ENCODE measurements at regions of chr1 and their contacts with region 1.

Region 1: GRCh38 chr1:24201941-24202440 is 14.9 kb upstream of the IFNLR1 start:
- DNase-seq: peak; percentile 79
- H3K4me3 Mint-ChIP-seq: no peak overlapping the region
- H3K27ac Mint-ChIP-seq: no peak overlapping the region
- H3K4me1 Mint-ChIP-seq: peaks cover 13% of the 10 kb centered on the region
- H3K27me3 Mint-ChIP-seq: no peaks in the 10 kb centered on the region

Region 2: DNA sequence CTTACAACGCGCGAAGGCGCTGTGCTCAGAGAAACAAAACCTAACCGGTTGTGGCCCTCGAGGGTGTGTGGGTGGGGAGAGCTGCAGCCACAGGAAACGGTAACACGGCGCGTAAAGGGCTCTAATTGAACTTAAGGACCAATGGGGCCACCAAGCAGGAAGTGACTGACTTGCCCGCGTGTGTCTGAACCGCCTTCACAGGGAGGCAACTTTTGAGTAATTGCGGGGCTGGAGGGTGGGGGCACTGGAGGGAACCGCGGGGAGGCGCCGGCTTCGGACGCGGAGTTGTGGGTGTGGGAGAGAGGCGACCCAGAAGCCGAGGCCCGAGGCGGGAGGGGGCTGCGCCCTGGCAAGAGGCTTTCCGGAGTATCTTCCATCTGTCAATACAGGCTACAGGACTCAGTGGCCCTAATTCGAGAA is 242.9 kb before region 1 on chr1:
- CTCF ChIA-PET with region 1: no interaction called
- intact Hi-C with region 1: no loop called
- DNase-seq: peak; percentile 98
- H3K4me3 Mint-ChIP-seq: peak overlapping the region; percentile 99
- H3K27ac Mint-ChIP-seq: peak overlapping the region; percentile 100
- H3K4me1 Mint-ChIP-seq: peaks cover 59% of the 10 kb centered on the region
- H3K27me3 Mint-ChIP-seq: no peaks in the 10 kb centered on the region

Region 3: DNA sequence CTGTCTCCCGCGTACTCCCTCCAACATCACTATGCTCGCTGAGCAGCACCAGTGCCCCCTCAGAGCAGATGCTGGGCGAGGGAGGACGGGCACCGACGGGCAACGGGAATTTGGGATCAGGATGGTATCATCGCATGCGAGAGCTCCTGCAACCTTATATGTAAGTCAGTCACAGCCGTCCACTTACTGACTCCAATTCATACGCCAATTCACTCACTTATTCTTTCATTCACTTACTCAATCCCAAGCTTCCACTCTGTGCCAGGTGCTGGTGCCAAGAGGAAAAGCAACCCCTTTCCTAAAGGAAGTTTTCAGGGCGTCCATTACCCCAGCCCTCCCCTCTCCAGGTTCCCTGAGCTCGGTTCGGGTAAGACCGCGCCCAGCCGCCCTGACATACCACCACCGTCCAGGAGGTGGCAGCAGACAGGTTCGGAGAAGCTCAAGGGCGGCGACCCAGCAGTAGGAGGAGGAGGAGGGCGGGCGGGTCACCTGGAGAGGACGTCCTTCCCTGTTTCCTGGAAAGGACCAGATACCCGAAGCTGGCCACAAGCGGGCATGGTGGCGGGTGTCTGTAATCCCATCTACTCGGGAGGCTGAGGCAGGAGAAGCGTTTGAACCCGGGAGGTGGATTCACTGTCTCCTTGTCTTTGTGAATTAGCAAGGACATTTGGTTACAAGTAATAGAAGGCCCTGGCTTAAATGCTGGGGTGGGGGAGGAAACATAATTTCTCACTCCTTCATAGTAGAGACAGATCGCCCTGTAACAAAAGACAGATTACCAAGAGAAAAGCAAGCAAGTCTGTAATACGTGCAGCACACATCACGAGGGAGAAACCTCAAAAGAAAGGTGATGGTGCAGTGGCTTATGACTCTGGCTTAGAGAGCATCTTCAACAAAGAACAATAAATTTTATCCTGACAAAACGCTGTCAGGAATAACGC is 51.5 kb before region 1 on chr1:
- CTCF ChIA-PET with region 1: interaction called, 31 read pairs
- intact Hi-C with region 1: loop called (anchors 1 kb)
- DNase-seq: peak; percentile 95
- H3K4me3 Mint-ChIP-seq: peak overlapping the region; percentile 63
- H3K27ac Mint-ChIP-seq: no peak overlapping the region
- H3K4me1 Mint-ChIP-seq: peaks cover 18% of the 10 kb centered on the region
- H3K27me3 Mint-ChIP-seq: peaks cover 32% of the 10 kb centered on the region

Region 4: DNA sequence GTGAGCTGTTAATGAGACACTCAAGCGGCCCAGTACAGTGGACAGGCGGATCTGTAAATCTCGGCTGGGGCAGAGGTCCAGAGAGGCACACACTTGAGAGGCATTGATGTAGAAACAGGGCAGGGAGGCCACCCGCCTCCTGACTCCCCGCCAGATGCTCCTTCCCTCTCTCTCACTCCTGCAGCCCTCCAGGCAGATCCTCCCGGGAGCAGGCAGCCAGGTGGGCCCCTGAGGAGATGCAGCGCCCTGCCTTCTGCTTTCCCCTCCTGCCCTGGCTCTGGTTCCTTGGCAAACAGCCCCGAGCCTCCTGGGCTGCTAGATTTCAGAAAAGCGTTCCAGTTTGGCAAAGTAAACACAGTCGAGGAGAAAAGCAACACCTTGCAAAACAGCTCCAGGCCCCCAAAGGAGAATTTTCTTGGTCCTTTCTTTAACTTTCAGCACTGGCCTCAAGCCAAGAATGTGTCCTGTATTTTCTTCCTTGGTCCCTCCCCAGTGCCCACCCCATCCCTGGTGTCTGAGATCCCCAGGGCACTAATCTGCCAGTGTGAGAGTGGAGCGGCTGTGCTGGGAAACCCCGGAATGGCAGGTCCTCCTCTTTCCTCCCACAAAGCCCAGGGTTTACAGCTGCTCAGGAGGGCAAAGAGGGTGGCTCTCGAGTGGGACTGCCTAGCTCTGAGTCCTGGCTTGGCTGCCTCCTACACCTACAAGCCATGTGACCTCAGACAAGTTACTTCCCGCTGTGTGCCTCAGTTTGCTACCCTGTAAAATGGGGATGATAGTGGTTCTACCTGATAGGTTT is 14.5 kb after region 1 on chr1:
- CTCF ChIA-PET with region 1: interaction called, 11 read pairs
- intact Hi-C with region 1: no loop called
- DNase-seq: no peak
- H3K4me3 Mint-ChIP-seq: no peak overlapping the region
- H3K27ac Mint-ChIP-seq: no peak overlapping the region
- H3K4me1 Mint-ChIP-seq: no peaks in the 10 kb centered on the region
- H3K27me3 Mint-ChIP-seq: peaks cover 20% of the 10 kb centered on the region

Region 5: GRCh38 chr1:24297852-24298232 is 95.9 kb after region 1 on chr1:
- CTCF ChIA-PET with region 1: no interaction called
- intact Hi-C with region 1: no loop called
- DNase-seq: no peak
- H3K4me3 Mint-ChIP-seq: no peak overlapping the region
- H3K27ac Mint-ChIP-seq: no peak overlapping the region
- H3K4me1 Mint-ChIP-seq: no peaks in the 10 kb centered on the region
- H3K27me3 Mint-ChIP-seq: peaks cover 9% of the 10 kb centered on the region

Region 6: GRCh38 chr1:24385160-24385940 is 183.4 kb after region 1 on chr1:
- CTCF ChIA-PET with region 1: interaction called, 304 read pairs
- intact Hi-C with region 1: no loop called
- DNase-seq: peak; percentile 71
- H3K4me3 Mint-ChIP-seq: no peak overlapping the region
- H3K27ac Mint-ChIP-seq: no peak overlapping the region
- H3K4me1 Mint-ChIP-seq: peaks cover 21% of the 10 kb centered on the region
- H3K27me3 Mint-ChIP-seq: no peaks in the 10 kb centered on the region

Region 7: GRCh38 chr1:24457871-24458270 is 255.9 kb after region 1 on chr1:
- CTCF ChIA-PET with region 1: interaction called, 13 read pairs
- intact Hi-C with region 1: no loop called
- DNase-seq: no peak
- H3K4me3 Mint-ChIP-seq: no peak overlapping the region
- H3K27ac Mint-ChIP-seq: no peak overlapping the region
- H3K4me1 Mint-ChIP-seq: peaks cover 13% of the 10 kb centered on the region
- H3K27me3 Mint-ChIP-seq: no peaks in the 10 kb centered on the region

Region 8: DNA sequence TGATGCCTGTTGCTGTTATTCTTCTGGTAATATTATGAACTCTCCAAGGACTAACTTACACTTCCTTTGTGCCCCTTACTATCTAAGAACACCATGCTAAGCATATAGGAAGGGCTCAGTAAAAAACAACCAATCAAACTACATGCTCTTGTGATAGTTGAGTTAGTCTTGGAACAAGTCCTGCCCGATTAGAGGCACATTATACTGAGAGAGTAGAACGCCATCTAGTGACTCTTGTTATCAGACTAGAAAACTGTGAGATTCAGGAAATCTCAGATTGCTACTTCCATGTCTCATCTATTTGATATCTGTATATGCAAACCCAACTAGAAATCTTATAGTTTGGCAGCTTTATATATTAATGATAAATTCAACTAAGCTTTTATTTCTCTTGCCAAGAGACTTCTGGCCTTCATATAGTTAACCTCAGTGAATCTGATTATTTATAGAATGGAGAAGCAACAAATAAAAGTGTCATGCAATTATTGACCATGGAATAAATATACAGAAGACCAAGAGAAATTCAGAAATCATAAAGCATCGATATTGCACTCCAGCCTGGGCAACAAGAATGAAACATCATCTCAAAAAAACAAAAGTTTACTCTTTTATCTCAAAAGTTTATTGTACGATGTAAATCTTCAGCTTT is 433.3 kb after region 1 on chr1:
- CTCF ChIA-PET with region 1: interaction called, 46 read pairs
- intact Hi-C with region 1: loop called (anchors 1 kb)
- DNase-seq: no peak
- H3K4me3 Mint-ChIP-seq: no peak overlapping the region
- H3K27ac Mint-ChIP-seq: no peak overlapping the region
- H3K4me1 Mint-ChIP-seq: peaks cover 11% of the 10 kb centered on the region
- H3K27me3 Mint-ChIP-seq: no peaks in the 10 kb centered on the region